Motor neuron (in vitro differentiated cells): ENCODE measurements at regions of chr3 and their contacts with region 1.

Region 1: GRCh38 chr3:189157232-189158007 is 14.4 kb upstream of the TPRG1 start:
- ATAC-seq: no peak
- H3K4me3 ChIP-seq: no peak overlapping the region
- H3K27ac ChIP-seq: no peak overlapping the region
- H3K4me1 ChIP-seq: no peaks in the 10 kb centered on the region

Region 2: DNA sequence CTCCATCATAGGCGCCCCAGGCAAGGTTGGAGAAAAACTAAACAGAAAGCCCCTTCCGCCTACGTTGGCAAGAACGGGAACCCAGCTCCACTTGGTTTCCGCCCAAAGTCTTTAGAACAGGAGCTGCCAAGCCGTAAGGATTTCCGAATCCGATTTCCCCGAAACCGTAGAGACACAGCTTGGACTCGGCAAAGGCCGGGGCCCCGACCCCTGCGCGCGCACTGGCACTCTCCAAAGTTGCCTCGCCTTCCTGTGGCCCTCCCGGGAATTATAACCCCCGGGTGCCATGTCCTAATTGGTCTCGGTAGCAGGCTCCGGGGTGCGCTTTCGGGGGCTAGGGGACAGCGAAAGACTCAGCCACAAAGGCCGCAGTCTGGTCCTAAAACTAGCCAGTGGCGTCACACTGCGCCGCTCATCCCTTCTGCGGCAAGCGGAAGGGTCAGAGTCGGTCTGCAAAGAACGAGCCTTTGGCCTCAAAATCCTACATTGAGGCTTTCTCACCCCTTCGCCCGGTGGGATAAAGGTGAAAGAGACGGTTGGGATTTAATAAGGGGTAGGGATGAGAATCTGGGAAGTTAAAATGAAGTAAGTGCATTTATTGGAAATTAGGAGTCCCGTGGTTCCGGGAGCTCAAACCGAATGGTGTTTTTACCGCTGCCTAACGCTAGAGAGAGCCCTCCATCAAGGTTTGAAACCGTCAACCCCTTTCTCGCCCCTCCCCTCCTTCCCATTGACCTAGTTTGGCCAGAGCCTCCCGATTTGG is 1418.9 kb before region 1 on chr3:
- in situ Hi-C with region 1: loop called in 2 of 9 experiments (anchors 10 to 25 kb)
- ATAC-seq: peak; percentile 6 to 67 (median 58)
- H3K4me3 ChIP-seq: peak overlapping the region; percentile 30 to 54 (median 40)
- H3K27ac ChIP-seq: no peak overlapping the region
- H3K4me1 ChIP-seq: peaks cover 3 to 6% of the 10 kb centered on the region in 2 donors

Region 3: GRCh38 chr3:188954590-188955208 is 202.7 kb before region 1 on chr3:
- in situ Hi-C with region 1: no loop called
- ATAC-seq: peak; percentile 81 to 99 (median 85)
- H3K4me3 ChIP-seq: peak overlapping the region in 1 of 5 donors; percentile 14
- H3K27ac ChIP-seq: no peak overlapping the region
- H3K4me1 ChIP-seq: no peaks in the 10 kb centered on the region

Region 4: DNA sequence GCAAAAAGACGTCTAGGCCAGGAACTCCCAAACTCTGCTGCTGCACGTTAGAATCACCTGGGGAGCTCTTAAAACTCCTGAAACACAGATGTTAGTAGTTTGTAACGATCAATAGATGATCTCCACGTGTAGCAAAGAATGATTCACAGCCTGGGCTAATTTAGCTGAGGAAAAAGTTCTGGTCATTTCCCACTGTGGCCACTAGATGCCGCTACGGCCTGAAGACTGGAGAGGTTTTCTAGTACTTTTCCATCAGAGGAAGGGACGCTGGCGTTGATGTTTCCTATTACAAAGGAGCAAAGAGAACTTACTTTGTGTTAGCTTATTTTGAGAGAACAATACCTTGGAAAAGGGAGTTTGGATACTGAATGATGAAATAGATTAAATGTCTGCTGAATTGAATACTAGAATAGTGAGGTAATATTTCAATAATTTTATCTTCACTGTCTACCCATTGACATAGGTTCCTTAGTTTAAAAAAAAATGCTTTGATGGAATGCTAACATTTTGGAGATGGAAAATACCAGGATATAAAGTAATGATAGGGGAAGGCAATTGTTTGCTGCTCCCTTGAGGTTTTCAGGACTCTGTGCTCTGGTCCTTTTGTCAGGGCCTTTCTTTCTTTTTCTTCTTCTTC is 804.2 kb after region 1 on chr3:
- in situ Hi-C with region 1: no loop called
- ATAC-seq: peak; percentile 65 to 86 (median 80)
- H3K4me3 ChIP-seq: no peak overlapping the region
- H3K27ac ChIP-seq: no peak overlapping the region
- H3K4me1 ChIP-seq: peaks cover 3 to 4% of the 10 kb centered on the region in 2 donors